ENCODE measurements at regions of chr19 and their contacts with region 1.

Region 1: DNA sequence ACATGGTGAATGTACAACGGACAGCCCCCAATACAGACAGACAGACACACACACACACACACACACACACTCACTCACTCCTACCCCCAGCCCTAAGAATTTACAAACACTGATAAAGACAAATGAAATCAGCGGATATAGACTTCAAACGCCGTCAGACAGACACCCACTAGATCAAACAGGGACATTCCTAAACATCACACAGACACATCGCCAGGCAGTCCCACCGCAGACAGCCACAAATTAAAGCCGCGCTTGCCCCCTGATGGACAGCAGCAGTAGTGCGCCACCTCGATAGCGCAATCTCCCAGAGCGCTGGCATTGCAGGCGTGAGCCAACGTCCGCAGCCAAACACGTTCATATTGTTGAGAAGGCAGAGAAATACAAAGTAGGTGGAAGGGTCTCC is 24.7 kb upstream of the ADGRE1 start:
- DNase-seq: peak; percentile 80
- ATAC-seq: peak; percentile 94
- H3K4me3 ChIP-seq: peak overlapping the region; percentile 67; the same call in 1 of the 2 replicates
- H3K27ac ChIP-seq: peak overlapping the region; percentile 56; the same call in 1 of the 2 replicates
- H3K4me1 ChIP-seq: peaks cover 11% of the 10 kb centered on the region
- H3K27me3 ChIP-seq: no peaks in the 10 kb centered on the region
- CTCF ChIP-seq: peak; percentile 92 to 99 (median 99); a peak in 5 of 6 replicates
- EP300 ChIP-seq: no peak
- POLR2A ChIP-seq: peak; percentile 65
- RAD21 ChIP-seq: peak; percentile 88

Region 2: GRCh38 chr19:6753178-6754031 is 109.3 kb before region 1 on chr19:
- CTCF ChIA-PET with region 1: interaction called, 3 read pairs
- POLR2A ChIA-PET with region 1: interaction called, 3 read pairs
- RAD21 ChIA-PET with region 1: no interaction called
- SMC1A ChIA-PET with region 1: no interaction called
- in situ Hi-C with region 1: no loop called
- intact Hi-C with region 1: loop called (anchors 5 kb)
- DNase-seq: peak; percentile 57
- ATAC-seq: peak; percentile 96
- H3K4me3 ChIP-seq: peak overlapping the region; percentile 48; the same call in 1 of the 2 replicates
- H3K27ac ChIP-seq: peak overlapping the region; percentile 64
- H3K4me1 ChIP-seq: peaks cover 18% of the 10 kb centered on the region
- H3K27me3 ChIP-seq: no peaks in the 10 kb centered on the region
- CTCF ChIP-seq: peak; percentile 52 to 75 (median 58)
- EP300 ChIP-seq: no peak
- POLR2A ChIP-seq: peak; percentile 80
- RAD21 ChIP-seq: peak; percentile 50; the same call in 1 of the 2 replicates

Region 3: DNA sequence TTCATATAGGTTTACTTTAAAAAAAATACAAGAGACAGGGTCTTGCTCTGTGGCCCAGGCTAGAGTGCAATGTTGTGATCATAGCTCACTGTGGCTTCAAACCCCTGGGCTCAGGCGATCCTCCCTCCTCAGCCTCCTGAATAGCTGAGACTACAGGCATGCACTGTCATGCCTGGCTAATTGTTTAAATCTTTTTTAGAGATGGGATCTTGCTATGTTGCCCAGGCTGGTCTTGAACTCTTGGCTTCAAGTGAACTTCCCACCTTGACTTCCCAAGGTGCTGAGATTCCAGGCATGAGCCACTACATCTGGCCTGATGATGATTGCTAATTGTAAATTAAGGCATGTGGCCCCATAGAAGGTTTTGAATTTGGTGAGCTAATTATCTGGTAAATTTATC is 10.7 kb before region 1 on chr19:
- CTCF ChIA-PET with region 1: interaction called, 4 read pairs
- POLR2A ChIA-PET with region 1: no interaction called
- RAD21 ChIA-PET with region 1: no interaction called
- SMC1A ChIA-PET with region 1: interaction called, 14 read pairs
- in situ Hi-C with region 1: no loop called
- intact Hi-C with region 1: no loop called
- DNase-seq: no peak
- ATAC-seq: no peak
- H3K4me3 ChIP-seq: no peak overlapping the region
- H3K27ac ChIP-seq: no peak overlapping the region
- H3K4me1 ChIP-seq: peaks cover 3% of the 10 kb centered on the region; the same call in 1 of the 2 replicates
- H3K27me3 ChIP-seq: no peaks in the 10 kb centered on the region
- CTCF ChIP-seq: no peak
- EP300 ChIP-seq: no peak
- POLR2A ChIP-seq: no peak
- RAD21 ChIP-seq: no peak

Region 4: GRCh38 chr19:7088999-7089398 is 226.3 kb after region 1 on chr19:
- CTCF ChIA-PET with region 1: no interaction called
- POLR2A ChIA-PET with region 1: no interaction called
- RAD21 ChIA-PET with region 1: no interaction called
- SMC1A ChIA-PET with region 1: no interaction called
- in situ Hi-C with region 1: no loop called
- intact Hi-C with region 1: no loop called
- DNase-seq: no peak
- ATAC-seq: no peak
- H3K4me3 ChIP-seq: no peak overlapping the region
- H3K27ac ChIP-seq: no peak overlapping the region
- H3K4me1 ChIP-seq: no peaks in the 10 kb centered on the region
- H3K27me3 ChIP-seq: no peaks in the 10 kb centered on the region
- CTCF ChIP-seq: no peak
- EP300 ChIP-seq: no peak
- POLR2A ChIP-seq: no peak
- RAD21 ChIP-seq: no peak

Region 5: GRCh38 chr19:7168941-7169340 is 306.3 kb after region 1 on chr19:
- CTCF ChIA-PET with region 1: no interaction called
- POLR2A ChIA-PET with region 1: no interaction called
- RAD21 ChIA-PET with region 1: no interaction called
- SMC1A ChIA-PET with region 1: no interaction called
- in situ Hi-C with region 1: no loop called
- intact Hi-C with region 1: no loop called
- DNase-seq: no peak
- ATAC-seq: no peak
- H3K4me3 ChIP-seq: no peak overlapping the region
- H3K27ac ChIP-seq: no peak overlapping the region
- H3K4me1 ChIP-seq: no peaks in the 10 kb centered on the region
- H3K27me3 ChIP-seq: no peaks in the 10 kb centered on the region
- CTCF ChIP-seq: no peak
- EP300 ChIP-seq: no peak
- POLR2A ChIP-seq: no peak
- RAD21 ChIP-seq: no peak